Posterior vena cava (tissue), 2 donors: ENCODE measurements at regions of chr4 and their contacts with region 1.

Region 1: GRCh38 chr4:2262143-2262943 is 434 bp upstream of the MXD4 start:
- DNase-seq: peak; percentile 100

Region 2: GRCh38 chr4:931960-932712 is 1330.2 kb before region 1 on chr4 and contains the starts of genes GAK and TMEM175:
- intact Hi-C with region 1: no loop called
- DNase-seq: peak; percentile 99
- total RNA-seq, gene GAK: 63.5 to 73.5 TPM
- total RNA-seq, gene TMEM175: 15.3 to 16.4 TPM

Region 3: DNA sequence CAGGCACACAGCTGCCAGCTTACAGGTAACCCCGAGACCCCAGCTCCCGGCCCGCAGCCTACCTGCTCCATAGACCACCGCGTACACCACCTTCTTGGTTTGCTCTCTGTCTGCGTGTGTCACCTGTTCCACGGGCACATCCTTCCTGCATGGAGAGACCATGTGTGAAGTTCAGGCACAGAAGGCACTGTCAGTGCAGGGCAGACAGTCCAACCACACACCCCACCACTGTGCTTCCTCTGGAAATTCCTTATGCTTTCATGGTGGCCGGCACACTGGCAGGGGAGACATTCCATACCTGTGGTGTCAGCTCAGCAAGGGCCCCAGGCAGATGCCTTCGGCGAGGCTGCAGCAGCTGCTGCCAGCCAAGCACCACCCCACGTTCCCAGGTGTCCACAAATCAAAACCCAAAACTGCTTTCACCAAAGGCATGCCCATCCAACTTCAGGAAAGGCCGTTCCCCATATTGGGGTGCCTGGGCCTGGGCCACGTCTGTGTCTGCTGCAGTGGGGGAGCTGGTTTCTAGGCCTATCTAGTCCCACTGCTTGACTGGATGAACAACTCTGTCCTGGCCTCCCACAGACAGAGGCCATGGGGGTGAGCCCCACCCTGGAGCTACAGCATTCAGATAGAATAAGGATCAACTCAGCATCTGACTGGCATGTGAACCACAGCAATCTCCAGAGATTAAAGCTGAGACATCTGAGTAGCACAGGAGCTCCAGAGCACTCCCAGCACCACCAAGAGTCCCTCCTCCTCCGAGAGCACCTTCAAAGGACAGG is 166.4 kb before region 1 on chr4:
- intact Hi-C with region 1: no loop called
- DNase-seq: peak; percentile 64

Region 4: DNA sequence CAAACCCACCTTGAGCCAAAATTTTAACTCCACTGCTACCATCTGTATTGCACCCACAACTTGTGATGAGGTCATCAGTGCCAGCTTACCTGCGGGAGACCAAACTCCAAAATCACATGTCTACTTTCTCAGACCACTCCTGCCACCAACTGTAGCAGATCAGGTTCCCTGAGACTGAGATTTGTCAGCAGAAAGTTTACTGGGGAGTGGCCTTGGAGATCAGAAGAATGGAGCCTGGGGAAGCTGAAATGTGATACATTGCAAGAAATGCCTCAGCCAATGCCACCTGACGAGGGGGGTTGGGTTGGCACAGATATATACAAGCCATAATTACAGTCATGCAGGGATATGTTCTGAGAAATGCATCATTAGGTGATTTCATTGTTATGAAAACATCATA is 39.5 kb before region 1 on chr4:
- intact Hi-C with region 1: loop called in 1 of 2 experiments (anchors 2 kb)
- DNase-seq: peak; percentile 11

Region 5: GRCh38 chr4:2418650-2419571 is 156.6 kb after region 1 on chr4 and contains the start of gene CFAP99:
- intact Hi-C with region 1: loop called in 1 of 2 experiments (anchors 10 kb)
- DNase-seq: peak; percentile 99
- total RNA-seq, gene CFAP99: not detected